IMR-90 (cell line): ENCODE measurements at regions of chr7 and their contacts with region 1.

Region 1: GRCh38 chr7:91165006-91165845 is 99.0 kb upstream of the FZD1 start:
- DNase-seq: peak; percentile 88
- ATAC-seq: peak; percentile 86
- H3K4me3 ChIP-seq: no peak overlapping the region
- H3K27ac ChIP-seq: peak overlapping the region; percentile 79
- H3K4me1 ChIP-seq: peaks cover 14% of the 10 kb centered on the region
- H3K27me3 ChIP-seq: no peaks in the 10 kb centered on the region
- CTCF ChIP-seq: no peak
- POLR2A ChIP-seq: no peak
- RAD21 ChIP-seq: no peak

Region 2: DNA sequence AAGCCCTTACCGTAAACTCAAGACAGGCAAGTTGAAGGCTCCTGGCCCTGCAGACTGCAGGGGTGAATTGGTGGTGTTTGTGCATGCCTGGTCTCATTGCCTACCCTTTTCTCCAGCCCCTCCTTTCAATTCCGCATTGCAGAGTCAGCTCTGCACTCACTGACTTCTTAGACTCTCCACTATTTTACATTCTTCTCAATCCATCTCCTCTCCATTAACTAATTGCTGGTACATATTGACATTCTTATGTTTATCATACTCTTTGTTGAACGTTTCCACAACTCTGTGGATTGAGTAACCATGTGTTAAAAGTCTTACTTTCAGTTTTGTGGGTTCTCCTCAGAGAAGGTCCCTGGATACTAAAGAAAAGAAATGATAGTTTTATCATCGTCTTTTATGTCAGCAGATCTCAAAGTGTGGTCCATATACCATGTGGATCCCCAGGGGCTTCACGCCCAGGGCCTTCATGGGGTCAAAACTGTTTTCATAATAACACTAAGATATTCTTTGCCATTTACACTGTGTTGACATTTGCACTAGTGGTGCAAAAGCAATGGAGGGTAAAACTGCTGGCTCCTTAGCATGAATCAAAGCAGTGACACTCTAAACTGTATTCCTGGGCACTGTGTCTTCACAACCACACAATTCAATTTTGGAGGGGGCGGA is 36.4 kb before region 1 on chr7:
- CTCF ChIA-PET with region 1: no interaction called
- POLR2A ChIA-PET with region 1: no interaction called
- dilution Hi-C with region 1: no loop called
- in situ Hi-C with region 1: no loop called
- intact Hi-C with region 1: loop called (anchors 5 kb)
- DNase-seq: peak; percentile 38
- ATAC-seq: peak; percentile 75
- H3K4me3 ChIP-seq: peak overlapping the region; percentile 7; the same call in 1 of the 2 replicates
- H3K27ac ChIP-seq: peak overlapping the region; percentile 89; the same call in 1 of the 2 replicates
- H3K4me1 ChIP-seq: peaks cover 6% of the 10 kb centered on the region
- H3K27me3 ChIP-seq: no peaks in the 10 kb centered on the region
- CTCF ChIP-seq: no peak
- POLR2A ChIP-seq: no peak
- RAD21 ChIP-seq: no peak

Region 3: GRCh38 chr7:91212587-91212986 is 47.4 kb after region 1 on chr7:
- CTCF ChIA-PET with region 1: no interaction called
- POLR2A ChIA-PET with region 1: no interaction called
- dilution Hi-C with region 1: no loop called
- in situ Hi-C with region 1: no loop called
- intact Hi-C with region 1: no loop called
- DNase-seq: peak; percentile 70
- ATAC-seq: peak; percentile 84
- H3K4me3 ChIP-seq: no peak overlapping the region
- H3K27ac ChIP-seq: no peak overlapping the region
- H3K4me1 ChIP-seq: peaks cover 2% of the 10 kb centered on the region
- H3K27me3 ChIP-seq: no peaks in the 10 kb centered on the region
- CTCF ChIP-seq: no peak
- POLR2A ChIP-seq: no peak
- RAD21 ChIP-seq: no peak